ENCODE measurements at regions of chr2 and their contacts with region 1.

Region 1: DNA sequence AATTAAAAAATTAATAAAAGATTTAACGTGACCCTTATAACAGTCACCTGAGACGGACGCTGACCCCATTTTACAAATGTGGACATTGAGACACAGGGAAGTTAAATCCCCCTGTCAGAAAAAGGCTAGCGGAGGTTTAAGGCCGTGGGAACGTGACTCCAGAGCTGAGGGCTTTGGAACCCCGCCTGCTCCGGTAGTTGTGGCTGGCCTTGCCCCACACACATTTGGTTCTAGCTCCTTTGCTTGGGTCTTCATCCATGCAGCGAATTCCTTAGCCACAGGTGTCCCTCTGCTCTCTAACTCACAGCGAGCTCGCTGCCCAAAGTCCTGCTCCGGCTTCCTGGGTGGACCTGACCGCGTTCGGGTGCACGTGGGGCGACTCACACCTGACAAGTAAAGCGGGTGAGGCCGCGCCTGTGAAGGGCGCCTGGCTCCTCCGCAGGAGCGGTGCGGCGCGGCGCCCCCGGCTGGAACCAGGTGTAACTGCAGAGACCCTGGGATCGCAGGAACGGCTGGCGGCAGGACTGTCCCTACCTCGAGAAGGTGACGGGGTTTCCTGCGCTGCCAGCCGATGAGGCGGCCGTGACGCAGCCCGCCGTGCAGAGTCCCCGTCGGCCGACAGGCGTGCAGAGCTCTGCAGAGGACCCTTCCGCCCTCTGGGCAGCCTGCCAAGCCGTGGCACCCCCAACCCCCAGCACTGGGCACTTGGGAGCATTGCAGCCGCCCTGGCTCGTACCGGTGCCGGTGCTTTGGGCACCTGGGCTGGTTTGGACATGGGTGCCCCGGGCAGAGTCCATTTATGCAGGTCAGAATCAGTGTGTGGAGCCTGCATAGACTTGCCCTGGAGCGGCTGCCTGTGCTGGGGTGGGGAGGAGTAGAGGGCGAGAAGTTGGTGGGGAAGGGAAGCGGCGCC is 2.4 kb upstream of the PROC start:
- DNase-seq: peak in 1 of 2 donors; percentile 79
- H3K4me3 ChIP-seq: peak overlapping the region; percentile 41 to 59
- H3K27ac ChIP-seq: no peak overlapping the region
- H3K4me1 ChIP-seq: peaks cover 8 to 37% of the 10 kb centered on the region in 2 donors
- H3K27me3 ChIP-seq: no peaks in the 10 kb centered on the region
- CTCF ChIP-seq: peak; percentile 62 to 79 (median 65)

Region 2: GRCh38 chr2:127324635-127325034 is 91.2 kb before region 1 on chr2:
- intact Hi-C with region 1: loop called (anchors 2 kb)
- DNase-seq: no peak
- H3K4me3 ChIP-seq: no peak overlapping the region
- H3K27ac ChIP-seq: no peak overlapping the region
- H3K4me1 ChIP-seq: no peaks in the 10 kb centered on the region
- H3K27me3 ChIP-seq: no peaks in the 10 kb centered on the region
- CTCF ChIP-seq: peak; percentile 35 to 67 (median 41)

Region 3: GRCh38 chr2:127371037-127371436 is 44.8 kb before region 1 on chr2:
- intact Hi-C with region 1: loop called (anchors 5 kb)
- DNase-seq: peak in 1 of 2 donors; percentile 91
- H3K4me3 ChIP-seq: peak overlapping the region in 1 of 2 donors; percentile 12
- H3K27ac ChIP-seq: peak overlapping the region; percentile 49 to 51
- H3K4me1 ChIP-seq: peaks cover 0 to 13% of the 10 kb centered on the region in 2 donors
- H3K27me3 ChIP-seq: no peaks in the 10 kb centered on the region
- CTCF ChIP-seq: no peak

Region 4: GRCh38 chr2:127387655-127388422 is 28.0 kb before region 1 on chr2 and contains the start of gene MAP3K2:
- intact Hi-C with region 1: loop called (anchors 2 kb)
- DNase-seq: peak; percentile 77 to 96
- H3K4me3 ChIP-seq: peak within 1 kb of the TSS; percentile 90 to 99
- H3K27ac ChIP-seq: peak within 1 kb of the TSS; percentile 98 to 100
- H3K4me1 ChIP-seq: peaks cover 8 to 15% of the 10 kb centered on the region in 2 donors
- H3K27me3 ChIP-seq: no peaks in the 10 kb centered on the region
- CTCF ChIP-seq: no peak
- total RNA-seq, gene MAP3K2: 47.7 TPM

Region 5: DNA sequence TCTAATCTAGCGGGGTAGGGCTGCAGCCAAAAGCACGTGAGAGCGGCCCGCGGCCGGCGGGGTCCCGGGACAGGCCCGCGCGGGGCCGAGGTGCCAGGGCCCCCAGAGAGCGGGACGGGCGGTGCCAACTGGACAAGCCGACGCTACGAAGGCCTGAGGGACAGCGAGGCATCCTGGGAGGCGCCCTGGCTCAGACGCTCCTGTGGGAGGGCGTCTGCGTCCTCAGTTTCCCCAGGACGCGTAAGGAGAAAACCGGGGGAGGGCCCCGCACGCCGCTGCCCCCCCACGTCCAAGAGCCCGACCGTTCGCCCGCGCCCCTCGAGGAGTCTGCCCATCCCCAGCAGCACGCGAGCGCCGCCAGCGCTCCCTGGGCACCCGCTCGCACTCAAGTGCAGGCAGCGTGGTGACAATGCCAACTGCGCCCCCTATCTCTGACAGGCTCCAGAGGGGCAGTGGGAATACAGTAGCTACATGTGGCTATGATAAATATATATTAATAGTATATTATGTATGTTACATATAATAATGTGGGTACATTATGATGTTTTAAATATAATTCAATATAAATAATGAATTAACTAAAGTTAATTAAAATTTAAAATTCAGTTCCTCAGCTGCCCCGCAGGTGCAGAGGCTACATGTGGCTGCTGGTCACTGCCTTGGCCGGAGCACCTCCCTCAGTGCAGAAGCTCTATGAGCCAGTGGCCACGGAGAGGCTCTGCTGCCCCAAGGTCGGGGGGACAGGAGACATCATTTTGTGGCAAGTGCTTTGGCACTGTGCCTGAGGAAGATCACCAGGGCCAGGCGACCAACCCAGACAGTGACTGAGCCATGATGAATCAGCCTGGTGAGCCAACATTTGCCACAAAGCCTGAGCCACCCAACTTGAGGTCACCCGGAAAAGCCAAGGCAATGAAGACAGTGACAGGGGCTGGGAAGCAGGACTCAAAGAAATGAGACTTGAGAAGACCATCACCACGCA is 279.9 kb after region 1 on chr2:
- intact Hi-C with region 1: loop called (anchors 10 kb)
- DNase-seq: peak in 1 of 2 donors; percentile 85
- H3K4me3 ChIP-seq: peak overlapping the region; percentile 23 to 63
- H3K27ac ChIP-seq: peak overlapping the region; percentile 67 to 93
- H3K4me1 ChIP-seq: peaks cover 0 to 6% of the 10 kb centered on the region in 2 donors
- H3K27me3 ChIP-seq: no peaks in the 10 kb centered on the region
- CTCF ChIP-seq: peak; percentile 49 to 83 (median 66)

Measured in ascending aorta (tissue), 2 donors.